GM12878 (cell line): ENCODE measurements at regions of chr15 and their contacts with region 1.

Region 1: GRCh38 chr15:92938387-92938786 is 38.3 kb downstream of the CHD2 start:
- DNase-seq: no peak
- ATAC-seq: peak; percentile 37; the same call in 2 of the 3 replicates
- H3K4me3 ChIP-seq: no peak overlapping the region
- H3K27ac ChIP-seq: no peak overlapping the region
- H3K4me1 ChIP-seq: no peaks in the 10 kb centered on the region
- H3K27me3 ChIP-seq: no peaks in the 10 kb centered on the region
- CTCF ChIP-seq: 0 out of 6 replicates have a peak, but pooled peaks of 2 of the 3 experiments have one; percentile 14 to 23
- EP300 ChIP-seq: no peak
- POLR2A ChIP-seq: no peak
- RAD21 ChIP-seq: no peak

Region 2: DNA sequence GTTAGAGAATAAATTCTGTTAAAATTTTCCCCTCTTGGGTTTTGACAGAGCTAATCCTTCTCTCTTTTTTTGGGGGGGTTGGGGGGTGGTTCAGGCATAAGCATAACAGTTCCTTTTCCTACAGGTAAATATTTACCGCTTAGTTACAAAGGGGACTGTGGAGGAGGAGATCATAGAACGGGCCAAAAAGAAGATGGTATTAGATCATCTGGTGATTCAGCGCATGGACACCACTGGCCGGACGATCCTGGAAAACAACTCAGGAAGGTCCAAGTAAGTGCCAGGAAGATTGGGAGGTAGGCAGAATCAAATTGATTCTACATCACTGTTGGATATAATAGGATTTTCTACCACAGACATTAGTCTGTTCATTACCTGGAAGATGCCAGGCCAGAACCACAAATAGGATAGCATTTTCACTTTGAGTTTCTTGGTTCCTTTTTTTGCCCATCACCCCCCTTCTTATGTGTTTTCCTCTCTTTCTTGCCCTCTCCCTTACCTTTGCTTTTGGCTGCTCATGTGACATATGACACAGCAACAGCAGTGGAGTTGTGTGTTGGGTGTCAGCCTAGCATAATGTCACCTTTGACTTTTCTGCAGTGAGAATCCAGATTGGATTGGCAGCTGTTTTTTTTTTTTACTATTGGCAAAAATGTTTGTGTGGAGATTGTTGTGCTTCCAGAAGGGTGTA is 40.8 kb after region 1 on chr15:
- CTCF ChIA-PET with region 1: interaction called, 3 read pairs
- POLR2A ChIA-PET with region 1: interaction called, 3 read pairs
- RAD21 ChIA-PET with region 1: interaction called, 3 read pairs
- SMC1A ChIA-PET with region 1: interaction called, 6 read pairs
- in situ Hi-C with region 1: loop called (anchors 5 kb)
- intact Hi-C with region 1: no loop called
- DNase-seq: peak; percentile 9
- ATAC-seq: peak; percentile 54
- H3K4me3 ChIP-seq: no peak overlapping the region
- H3K27ac ChIP-seq: no peak overlapping the region
- H3K4me1 ChIP-seq: no peaks in the 10 kb centered on the region
- H3K27me3 ChIP-seq: no peaks in the 10 kb centered on the region
- CTCF ChIP-seq: no peak
- EP300 ChIP-seq: no peak
- POLR2A ChIP-seq: no peak
- RAD21 ChIP-seq: no peak

Region 3: GRCh38 chr15:93001881-93002280 is 63.5 kb after region 1 on chr15:
- CTCF ChIA-PET with region 1: no interaction called
- POLR2A ChIA-PET with region 1: interaction called, 3 read pairs
- RAD21 ChIA-PET with region 1: no interaction called
- SMC1A ChIA-PET with region 1: no interaction called
- in situ Hi-C with region 1: no loop called
- intact Hi-C with region 1: loop called (anchors 5 kb)
- DNase-seq: no peak
- ATAC-seq: peak; percentile 50; the same call in 2 of the 3 replicates
- H3K4me3 ChIP-seq: no peak overlapping the region
- H3K27ac ChIP-seq: no peak overlapping the region
- H3K4me1 ChIP-seq: no peaks in the 10 kb centered on the region
- H3K27me3 ChIP-seq: no peaks in the 10 kb centered on the region
- CTCF ChIP-seq: no peak
- EP300 ChIP-seq: no peak
- POLR2A ChIP-seq: no peak
- RAD21 ChIP-seq: no peak